Activated CD4-positive, alpha-beta T cell treated with anti-CD3 and anti-CD28 coated beads for 36 hours (primary cell): ENCODE measurements at regions of chr10 and their contacts with region 1.

Region 1: GRCh38 chr10:18651324-18652007 is at the start of gene NSUN6:
- DNase-seq: peak; percentile 95
- ATAC-seq: peak; percentile 91
- H3K4me3 Mint-ChIP-seq: peak within 1 kb of the TSS; percentile 97
- H3K27ac Mint-ChIP-seq: peak within 1 kb of the TSS; percentile 93
- H3K4me1 Mint-ChIP-seq: peaks cover 29% of the 10 kb centered on the region
- H3K27me3 Mint-ChIP-seq: no peaks in the 10 kb centered on the region
- total RNA-seq, gene NSUN6: 15.7 to 16.0 TPM

Region 2: DNA sequence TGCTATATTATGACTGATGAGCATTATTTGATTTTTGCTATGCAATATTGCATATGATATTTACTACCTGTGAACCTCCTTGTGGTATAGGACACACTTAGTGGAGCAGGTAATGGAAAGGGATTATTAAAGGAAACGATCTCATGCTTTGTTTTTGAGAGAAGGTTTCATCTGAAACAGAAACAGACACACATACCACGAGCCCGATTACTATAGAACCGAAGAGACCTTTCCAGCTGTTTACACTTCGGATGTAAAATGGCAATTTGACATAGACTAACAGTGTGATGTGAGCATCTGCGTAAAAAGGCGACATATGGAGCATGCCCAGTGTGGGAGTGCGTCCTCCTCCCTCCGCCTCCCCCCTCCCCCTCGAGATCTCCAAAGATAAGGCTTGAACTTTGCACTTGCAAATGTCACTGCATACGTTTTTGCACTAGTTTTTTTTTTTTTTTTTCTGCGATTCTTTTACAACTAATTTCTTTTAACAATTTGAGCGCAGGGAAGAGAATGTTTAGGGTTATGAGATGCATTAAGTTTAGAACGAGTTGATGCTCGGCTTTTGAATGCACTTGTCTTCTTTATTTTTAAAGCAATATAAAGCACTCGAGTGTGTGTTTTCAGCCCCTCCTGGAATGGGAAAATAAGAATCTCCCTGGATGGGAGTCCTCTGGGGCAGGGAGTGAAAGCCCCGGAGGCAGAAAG is 251.1 kb before region 1 on chr10:
- CTCF ChIA-PET with region 1: no interaction called
- POLR2A ChIA-PET with region 1: no interaction called
- intact Hi-C with region 1: no loop called
- DNase-seq: peak; percentile 32
- ATAC-seq: peak; percentile 39
- H3K4me3 Mint-ChIP-seq: peak overlapping the region; percentile 19
- H3K27ac Mint-ChIP-seq: no peak overlapping the region
- H3K4me1 Mint-ChIP-seq: peaks cover 9% of the 10 kb centered on the region
- H3K27me3 Mint-ChIP-seq: peaks cover 5% of the 10 kb centered on the region

Region 3: GRCh38 chr10:18437486-18437885 is 214.0 kb before region 1 on chr10:
- CTCF ChIA-PET with region 1: no interaction called
- POLR2A ChIA-PET with region 1: no interaction called
- intact Hi-C with region 1: no loop called
- DNase-seq: no peak
- ATAC-seq: no peak
- H3K4me3 Mint-ChIP-seq: no peak overlapping the region
- H3K27ac Mint-ChIP-seq: no peak overlapping the region
- H3K4me1 Mint-ChIP-seq: no peaks in the 10 kb centered on the region
- H3K27me3 Mint-ChIP-seq: no peaks in the 10 kb centered on the region

Region 4: GRCh38 chr10:18501198-18501597 is 150.3 kb before region 1 on chr10:
- CTCF ChIA-PET with region 1: no interaction called
- POLR2A ChIA-PET with region 1: no interaction called
- intact Hi-C with region 1: loop called in 1 of 2 experiments (anchors 5 kb)
- DNase-seq: peak; percentile 14
- ATAC-seq: peak; percentile 98
- H3K4me3 Mint-ChIP-seq: no peak overlapping the region
- H3K27ac Mint-ChIP-seq: no peak overlapping the region
- H3K4me1 Mint-ChIP-seq: peaks cover 4% of the 10 kb centered on the region
- H3K27me3 Mint-ChIP-seq: peaks cover 6% of the 10 kb centered on the region

Region 5: GRCh38 chr10:18625886-18626285 is 25.6 kb before region 1 on chr10:
- CTCF ChIA-PET with region 1: interaction called, 5 read pairs
- POLR2A ChIA-PET with region 1: no interaction called
- intact Hi-C with region 1: loop called (anchors 1 kb)
- DNase-seq: no peak
- ATAC-seq: no peak
- H3K4me3 Mint-ChIP-seq: no peak overlapping the region
- H3K27ac Mint-ChIP-seq: no peak overlapping the region
- H3K4me1 Mint-ChIP-seq: peaks cover 12% of the 10 kb centered on the region
- H3K27me3 Mint-ChIP-seq: no peaks in the 10 kb centered on the region